Gastrocnemius medialis (tissue), 4 donors: ENCODE measurements at regions of chr17 and their contacts with region 1.

Region 1: DNA sequence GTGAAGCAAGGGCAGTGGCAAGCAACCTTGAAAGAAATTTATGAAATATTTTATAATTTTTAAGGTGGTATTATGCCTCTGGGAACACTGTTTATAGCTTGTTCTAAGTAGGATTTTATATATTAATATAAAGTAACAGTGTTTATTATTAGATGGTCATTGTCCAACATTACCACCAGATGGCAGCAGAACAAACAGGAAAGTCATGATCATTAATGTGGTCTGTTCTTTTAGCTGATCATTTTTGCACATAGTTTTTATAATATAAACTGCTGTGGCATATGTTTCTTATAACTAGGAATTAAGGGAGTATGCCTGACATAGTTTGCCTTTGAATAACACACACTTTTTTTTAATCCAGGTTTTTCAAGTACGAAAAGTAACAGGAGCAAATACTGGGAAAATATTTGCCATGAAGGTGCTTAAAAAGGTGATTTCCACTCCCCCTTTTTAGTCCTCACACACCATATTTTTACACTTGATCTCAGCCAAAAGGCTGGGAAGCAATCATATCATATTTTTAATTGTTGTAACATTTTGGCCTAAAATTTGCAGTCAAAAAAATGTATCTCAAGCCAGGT is 21.4 kb downstream of the RPS6KB1 start:
- DNase-seq: no peak
- ATAC-seq: no peak
- H3K4me3 ChIP-seq: no peak overlapping the region
- H3K27ac ChIP-seq: no peak overlapping the region
- H3K4me1 ChIP-seq: no peaks in the 10 kb centered on the region
- H3K27me3 ChIP-seq: no peaks in the 10 kb centered on the region
- CTCF ChIP-seq: peak; percentile 37 to 70 (median 56)
- POLR2A ChIP-seq: no peak

Region 2: GRCh38 chr17:60036796-60037612 is 122.6 kb after region 1 on chr17:
- in situ Hi-C with region 1: loop called (anchors 10 to 25 kb)
- intact Hi-C with region 1: loop called (anchors 10 kb)
- DNase-seq: peak; percentile 10 to 36
- ATAC-seq: peak; percentile 57 to 62
- H3K4me3 ChIP-seq: peak overlapping the region in 1 of 4 donors; percentile 31
- H3K27ac ChIP-seq: no peak overlapping the region
- H3K4me1 ChIP-seq: no peaks in the 10 kb centered on the region
- H3K27me3 ChIP-seq: peaks cover 0 to 8% (median 0%) of the 10 kb centered on the region in 3 donors
- CTCF ChIP-seq: peak; percentile 43 to 90 (median 64)
- POLR2A ChIP-seq: no peak

Region 3: GRCh38 chr17:60049936-60050335 is 135.6 kb after region 1 on chr17:
- in situ Hi-C with region 1: loop called in 3 of 4 experiments (anchors 10 to 25 kb)
- intact Hi-C with region 1: no loop called
- DNase-seq: no peak
- ATAC-seq: no peak
- H3K4me3 ChIP-seq: no peak overlapping the region
- H3K27ac ChIP-seq: no peak overlapping the region
- H3K4me1 ChIP-seq: no peaks in the 10 kb centered on the region
- H3K27me3 ChIP-seq: no peaks in the 10 kb centered on the region
- CTCF ChIP-seq: no peak
- POLR2A ChIP-seq: no peak

Region 4: DNA sequence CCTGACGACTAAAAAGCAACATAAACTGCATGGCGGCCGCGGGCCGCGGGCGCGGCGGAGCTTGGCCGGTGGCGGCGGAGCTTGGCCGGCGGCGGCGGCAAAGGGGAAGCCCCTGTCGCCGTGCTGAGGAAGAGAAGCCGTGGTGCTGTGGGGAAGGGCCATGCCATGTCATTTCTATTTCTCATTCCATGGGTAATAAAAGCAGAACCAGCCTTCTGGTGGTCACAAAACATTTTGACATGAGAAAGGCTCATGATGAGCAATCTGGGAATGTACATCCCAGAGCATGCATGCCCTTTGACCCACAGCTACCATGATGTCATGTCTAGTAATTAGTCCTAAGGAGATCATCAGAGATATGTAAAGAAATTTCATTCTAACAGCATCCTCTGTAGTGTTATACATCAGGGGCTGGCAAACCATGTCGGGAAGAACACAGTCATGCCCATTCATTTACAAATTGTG is 188.3 kb after region 1 on chr17:
- in situ Hi-C with region 1: loop called in 1 of 4 experiments (anchors 25 kb)
- intact Hi-C with region 1: no loop called
- DNase-seq: no peak
- ATAC-seq: peak in 1 of 2 donors; percentile 41
- H3K4me3 ChIP-seq: peak overlapping the region in 1 of 4 donors; percentile 20
- H3K27ac ChIP-seq: no peak overlapping the region
- H3K4me1 ChIP-seq: no peaks in the 10 kb centered on the region
- H3K27me3 ChIP-seq: peaks cover 0 to 5% (median 0%) of the 10 kb centered on the region in 3 donors
- CTCF ChIP-seq: no peak
- POLR2A ChIP-seq: no peak